Activated CD8-positive, alpha-beta memory T cell treated with anti-CD3 and anti-CD28 coated beads, Interleukin-2, amount 10 ng/mL, durations not matched to agents 7 days and 5 days (primary cell): ENCODE measurements at regions of chr5 and their contacts with region 1.

Region 1: DNA sequence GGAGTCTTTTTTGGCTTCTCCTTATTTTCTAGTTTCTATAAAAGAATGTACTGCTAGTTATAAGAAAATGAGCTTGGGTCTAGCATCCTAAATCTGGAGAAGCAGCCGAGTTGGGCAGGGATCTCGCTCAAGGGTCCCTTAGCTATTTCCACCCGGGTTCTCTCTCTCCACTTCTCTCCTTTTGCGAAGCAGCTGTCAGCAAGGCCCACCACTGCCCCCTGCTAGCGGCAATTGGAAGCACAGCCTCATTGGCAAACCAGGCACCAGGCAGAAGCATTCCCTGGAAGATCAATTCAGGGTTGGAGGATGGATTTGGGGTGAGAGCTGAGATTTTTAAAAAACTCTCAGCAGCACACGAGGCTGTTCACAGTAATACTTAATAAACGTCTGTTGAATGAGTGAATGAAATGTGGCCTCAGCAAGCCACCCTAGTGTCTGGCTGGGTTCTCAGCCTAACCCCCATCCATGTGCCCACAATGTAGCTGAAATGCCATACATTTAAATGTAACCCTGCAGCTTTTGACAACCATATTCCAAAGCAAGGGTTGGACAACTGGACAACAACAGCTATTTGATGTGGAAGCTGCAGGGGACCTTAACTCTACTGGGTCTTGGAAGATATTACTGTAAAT is 34.6 kb upstream of the TNIP1 start:
- DNase-seq: peak; percentile 77
- ATAC-seq: peak; percentile 68
- H3K4me3 Mint-ChIP-seq: no peak overlapping the region
- H3K27ac Mint-ChIP-seq: no peak overlapping the region
- H3K4me1 Mint-ChIP-seq: no peaks in the 10 kb centered on the region
- H3K27me3 Mint-ChIP-seq: no peaks in the 10 kb centered on the region

Region 2: DNA sequence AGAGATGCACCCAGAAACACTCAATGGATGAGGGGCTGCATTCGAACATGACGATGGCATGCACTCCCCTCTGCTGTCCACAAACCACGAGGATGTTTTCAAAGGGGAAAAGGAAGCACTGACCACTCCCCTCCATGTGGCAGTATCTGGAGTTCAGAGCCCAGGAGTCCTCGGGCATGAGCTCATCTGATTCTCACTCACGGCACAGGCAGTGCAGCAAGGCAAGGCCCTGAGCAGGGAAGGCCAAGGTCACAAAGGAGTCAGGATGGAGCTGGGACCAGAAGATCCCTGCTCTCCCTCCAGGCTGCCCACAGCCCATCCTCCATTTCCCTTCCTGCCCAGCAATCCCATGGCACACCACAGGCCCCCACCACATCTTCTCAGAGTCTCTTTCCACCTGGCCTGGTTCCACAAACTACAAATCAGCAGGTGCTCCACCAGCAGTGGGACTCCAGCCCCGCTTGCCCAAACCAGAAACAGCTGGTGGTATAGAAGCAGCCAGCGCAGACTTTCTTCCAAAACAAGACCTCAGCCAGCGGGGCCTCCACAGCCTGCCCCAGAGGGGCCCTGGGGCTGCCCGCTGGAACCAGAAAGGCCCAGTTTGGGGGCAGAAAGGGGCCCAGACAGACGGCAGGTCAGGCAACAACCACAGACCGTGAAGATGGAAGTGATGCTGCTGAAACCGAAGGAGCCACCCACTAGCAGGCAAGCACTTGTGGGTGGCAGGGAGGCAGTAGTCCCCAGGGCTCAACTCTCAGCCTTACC is 46.8 kb before region 1 on chr5:
- CTCF ChIA-PET with region 1: interaction called, 12 read pairs
- DNase-seq: peak; percentile 58
- ATAC-seq: peak; percentile 66
- H3K4me3 Mint-ChIP-seq: no peak overlapping the region
- H3K27ac Mint-ChIP-seq: peak overlapping the region; percentile 67
- H3K4me1 Mint-ChIP-seq: peaks cover 61% of the 10 kb centered on the region
- H3K27me3 Mint-ChIP-seq: no peaks in the 10 kb centered on the region

Region 3: GRCh38 chr5:151097786-151098498 is 17.4 kb before region 1 on chr5:
- CTCF ChIA-PET with region 1: interaction called, 41 read pairs
- DNase-seq: peak; percentile 82
- ATAC-seq: peak; percentile 74
- H3K4me3 Mint-ChIP-seq: peak overlapping the region; percentile 49
- H3K27ac Mint-ChIP-seq: peak overlapping the region; percentile 62
- H3K4me1 Mint-ChIP-seq: peaks cover 83% of the 10 kb centered on the region
- H3K27me3 Mint-ChIP-seq: no peaks in the 10 kb centered on the region

Region 4: DNA sequence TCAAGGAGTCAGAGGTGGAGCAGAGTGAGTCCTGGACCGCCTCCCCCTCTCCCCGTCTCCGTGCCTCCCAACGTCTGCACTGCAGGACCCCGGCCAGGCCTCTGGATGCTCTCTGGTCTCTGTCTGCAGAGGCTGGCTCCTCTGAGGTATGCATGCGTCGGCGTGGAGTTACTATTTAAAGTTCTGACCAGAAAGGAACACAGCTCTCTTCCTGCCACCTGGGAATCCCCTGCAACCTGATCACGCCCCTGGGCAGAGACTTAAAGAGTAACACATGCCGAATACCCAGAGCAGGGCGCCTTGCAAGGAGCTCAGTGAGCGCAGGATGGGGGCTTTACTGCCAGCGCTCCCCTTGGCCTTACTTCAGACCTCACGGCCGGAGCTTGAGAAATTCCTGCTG is 26.1 kb after region 1 on chr5:
- CTCF ChIA-PET with region 1: interaction called, 16 read pairs
- DNase-seq: peak; percentile 77
- ATAC-seq: peak; percentile 78
- H3K4me3 Mint-ChIP-seq: peak overlapping the region; percentile 46
- H3K27ac Mint-ChIP-seq: peak overlapping the region; percentile 72
- H3K4me1 Mint-ChIP-seq: peaks cover 93% of the 10 kb centered on the region
- H3K27me3 Mint-ChIP-seq: no peaks in the 10 kb centered on the region

Region 5: GRCh38 chr5:151171529-151171928 is 56.1 kb after region 1 on chr5:
- CTCF ChIA-PET with region 1: interaction called, 260 read pairs
- DNase-seq: no peak
- ATAC-seq: no peak
- H3K4me3 Mint-ChIP-seq: no peak overlapping the region
- H3K27ac Mint-ChIP-seq: no peak overlapping the region
- H3K4me1 Mint-ChIP-seq: peaks cover 12% of the 10 kb centered on the region
- H3K27me3 Mint-ChIP-seq: no peaks in the 10 kb centered on the region